ENCODE measurements at regions of chr6 and their contacts with region 1.

Region 1: DNA sequence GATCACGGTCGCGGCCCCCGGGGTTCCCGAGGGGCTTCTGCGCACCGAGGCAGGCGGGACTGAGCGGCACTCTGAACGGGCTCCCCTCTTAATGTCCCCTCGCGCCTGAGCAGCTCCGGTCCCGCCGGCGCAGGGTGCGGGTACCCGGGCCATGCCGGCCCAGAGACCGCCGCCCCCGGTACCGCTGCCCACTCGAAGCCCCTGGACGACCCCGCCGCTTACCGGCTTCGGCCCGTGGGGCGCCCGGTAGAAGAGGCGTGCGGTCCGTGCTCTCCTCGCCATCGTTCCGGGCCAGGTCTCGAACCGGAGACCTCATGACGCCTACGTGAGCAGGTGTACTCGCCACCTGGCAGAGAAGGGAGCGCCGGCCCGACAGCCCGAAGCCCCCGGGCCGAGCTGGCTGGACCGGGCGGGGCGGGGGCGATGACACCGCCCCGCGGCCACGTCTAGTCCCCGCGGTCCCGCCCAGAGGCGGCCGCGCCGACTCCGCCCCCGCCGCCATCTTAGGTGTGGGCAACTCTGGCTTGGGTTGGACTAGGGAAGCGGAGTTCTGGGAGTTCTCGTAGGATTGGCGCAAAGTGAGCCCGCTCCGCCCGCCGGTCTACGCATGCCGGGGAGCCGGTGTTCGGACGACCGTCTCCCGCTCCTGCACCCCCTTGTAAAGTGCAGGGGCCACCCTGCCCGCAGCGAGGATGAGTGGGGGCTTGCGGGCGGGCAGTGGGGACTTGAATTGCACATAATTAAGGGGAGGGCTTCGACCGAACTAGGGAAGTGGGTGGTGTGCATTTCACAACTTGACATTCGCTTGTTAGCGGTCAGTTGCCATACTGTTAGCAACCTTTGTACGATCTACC is at the start of gene SLC17A5:
- DNase-seq: peak; percentile 82 to 91 (median 87)
- H3K4me3 ChIP-seq: peak within 1 kb of the TSS; percentile 97
- H3K4me3 Mint-ChIP-seq: peak within 1 kb of the TSS; percentile 99 to 100 (median 99)
- H3K27ac ChIP-seq: peak within 1 kb of the TSS; percentile 93
- H3K27ac Mint-ChIP-seq: peak within 1 kb of the TSS; percentile 93 to 99 (median 98)
- H3K4me1 ChIP-seq: peaks cover 22% of the 10 kb centered on the region
- H3K4me1 Mint-ChIP-seq: peaks cover 40 to 47% (median 46%) of the 10 kb centered on the region in 3 donors
- H3K27me3 ChIP-seq: no peaks in the 10 kb centered on the region
- H3K27me3 Mint-ChIP-seq: no peaks in the 10 kb centered on the region
- total RNA-seq, gene SLC17A5: 5.4 to 5.6 TPM

Region 2: GRCh38 chr6:73631849-73632248 is 21.9 kb before region 1 on chr6:
- CTCF ChIA-PET with region 1: interaction called, 12 read pairs
- POLR2A ChIA-PET with region 1: no interaction called
- DNase-seq: no peak
- H3K4me3 ChIP-seq: no peak overlapping the region
- H3K4me3 Mint-ChIP-seq: no peak overlapping the region
- H3K27ac ChIP-seq: no peak overlapping the region
- H3K27ac Mint-ChIP-seq: peak overlapping the region in 4 of 8 donors; percentile 6 to 73 (median 56)
- H3K4me1 ChIP-seq: no peaks in the 10 kb centered on the region
- H3K4me1 Mint-ChIP-seq: no peaks in the 10 kb centered on the region
- H3K27me3 ChIP-seq: no peaks in the 10 kb centered on the region
- H3K27me3 Mint-ChIP-seq: no peaks in the 10 kb centered on the region

Region 3: DNA sequence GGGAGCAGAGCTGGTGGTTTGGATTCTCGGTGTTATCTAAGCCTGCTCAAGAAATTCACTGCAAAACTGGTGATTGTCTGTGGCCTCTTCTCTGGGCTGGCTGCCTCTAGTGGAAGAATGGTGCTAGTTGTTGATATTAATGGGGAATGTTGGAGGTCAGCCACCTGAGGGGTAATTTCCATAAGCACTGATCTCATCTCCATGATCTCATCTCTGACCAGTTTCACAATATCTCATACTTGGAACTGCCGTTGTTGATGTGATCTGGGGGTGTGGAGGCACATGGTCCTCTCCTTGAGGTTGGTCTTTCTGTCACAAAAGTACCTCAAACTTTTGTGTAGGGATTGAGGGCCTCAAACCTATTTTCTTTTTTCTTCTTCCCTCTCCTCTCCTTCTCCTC is 144.8 kb after region 1 on chr6:
- CTCF ChIA-PET with region 1: no interaction called
- POLR2A ChIA-PET with region 1: no interaction called
- DNase-seq: no peak
- H3K4me3 ChIP-seq: no peak overlapping the region
- H3K4me3 Mint-ChIP-seq: no peak overlapping the region
- H3K27ac ChIP-seq: no peak overlapping the region
- H3K27ac Mint-ChIP-seq: no peak overlapping the region
- H3K4me1 ChIP-seq: no peaks in the 10 kb centered on the region
- H3K4me1 Mint-ChIP-seq: no peaks in the 10 kb centered on the region
- H3K27me3 ChIP-seq: no peaks in the 10 kb centered on the region
- H3K27me3 Mint-ChIP-seq: no peaks in the 10 kb centered on the region